MCF 10A (cell line): ENCODE measurements at regions of chr18 and their contacts with region 1.

Region 1: GRCh38 chr18:51197661-51198424 is at the start of gene MEX3C:
- DNase-seq: peak; percentile 100
- H3K4me3 Mint-ChIP-seq: peak within 1 kb of the TSS; percentile 69
- H3K27ac Mint-ChIP-seq: peak within 1 kb of the TSS; percentile 92
- H3K4me1 Mint-ChIP-seq: peaks cover 18% of the 10 kb centered on the region
- H3K27me3 Mint-ChIP-seq: no peaks in the 10 kb centered on the region
- CTCF ChIP-seq: no peak
- total RNA-seq, gene MEX3C: 65.3 and 81.9 TPM in 2 replicates

Region 2: GRCh38 chr18:49572611-49573345 is 1625.1 kb before region 1 on chr18:
- CTCF ChIA-PET with region 1: no interaction called
- POLR2A ChIA-PET with region 1: no interaction called
- intact Hi-C with region 1: no loop called
- DNase-seq: no peak
- H3K4me3 Mint-ChIP-seq: no peak overlapping the region
- H3K27ac Mint-ChIP-seq: no peak overlapping the region
- H3K4me1 Mint-ChIP-seq: peaks cover 17% of the 10 kb centered on the region
- H3K27me3 Mint-ChIP-seq: no peaks in the 10 kb centered on the region
- CTCF ChIP-seq: no peak

Region 3: GRCh38 chr18:50707855-50708469 is 489.9 kb before region 1 on chr18:
- CTCF ChIA-PET with region 1: no interaction called
- POLR2A ChIA-PET with region 1: no interaction called
- intact Hi-C with region 1: no loop called
- DNase-seq: peak; percentile 51
- H3K4me3 Mint-ChIP-seq: no peak overlapping the region
- H3K27ac Mint-ChIP-seq: no peak overlapping the region
- H3K4me1 Mint-ChIP-seq: no peaks in the 10 kb centered on the region
- H3K27me3 Mint-ChIP-seq: peaks cover 17% of the 10 kb centered on the region
- CTCF ChIP-seq: no peak

Region 4: DNA sequence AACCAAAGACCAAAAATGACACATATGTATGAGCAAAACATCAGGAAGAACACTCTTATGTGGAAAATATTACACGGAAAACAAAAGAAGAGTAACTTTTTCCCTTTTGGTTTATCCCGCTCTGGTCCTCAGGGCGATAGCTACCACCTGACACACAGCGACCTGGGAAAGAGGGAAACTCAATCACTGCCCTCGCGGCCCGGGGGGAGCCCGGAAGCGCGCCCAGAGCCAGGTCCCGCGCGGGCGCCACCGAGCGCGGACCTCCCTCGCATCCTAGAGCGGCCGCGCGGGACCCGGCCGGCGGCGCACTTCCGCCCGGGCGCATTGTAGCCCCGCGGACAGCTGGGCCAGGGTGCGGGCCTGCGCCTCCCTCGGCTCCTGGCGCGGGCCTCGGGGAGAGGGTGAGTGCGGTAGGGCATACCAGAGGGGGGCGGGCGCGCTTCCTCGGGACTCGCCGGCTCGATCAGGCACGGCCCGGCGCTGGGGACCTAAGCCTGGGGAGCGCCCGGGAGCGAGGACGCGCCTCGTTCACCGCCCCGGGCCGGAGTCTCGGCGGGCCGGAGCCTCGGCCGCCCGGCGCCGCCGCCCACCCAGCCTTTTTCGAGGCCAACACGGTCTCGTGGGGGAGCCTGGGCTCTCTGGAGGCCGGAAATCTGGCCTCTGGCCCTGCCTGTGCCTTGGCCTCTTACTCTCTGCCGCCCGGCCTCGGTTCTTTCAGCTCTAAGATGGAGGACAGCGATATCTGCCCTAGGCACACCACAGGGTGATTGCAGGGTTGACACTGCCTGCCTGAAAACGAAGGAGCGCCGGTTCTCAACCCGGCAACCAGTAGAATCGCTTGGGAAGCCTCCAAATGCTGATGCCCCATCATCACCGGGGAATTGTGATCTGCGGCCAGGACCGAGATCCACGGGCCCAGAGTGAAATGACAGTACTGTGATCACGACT is 229.9 kb before region 1 on chr18 and contains the start of gene ELAC1:
- CTCF ChIA-PET with region 1: no interaction called
- POLR2A ChIA-PET with region 1: no interaction called
- intact Hi-C with region 1: no loop called
- DNase-seq: peak; percentile 72
- H3K4me3 Mint-ChIP-seq: peak within 1 kb of the TSS; percentile 68
- H3K27ac Mint-ChIP-seq: peak within 1 kb of the TSS; percentile 75
- H3K4me1 Mint-ChIP-seq: peaks cover 27% of the 10 kb centered on the region
- H3K27me3 Mint-ChIP-seq: no peaks in the 10 kb centered on the region
- CTCF ChIP-seq: no peak
- total RNA-seq, gene ELAC1: 10.8 and 14.0 TPM in 2 replicates

Region 5: GRCh38 chr18:51029694-51030536 is 167.9 kb before region 1 on chr18 and contains the start of gene SMAD4:
- CTCF ChIA-PET with region 1: no interaction called
- POLR2A ChIA-PET with region 1: interaction called, 12 read pairs
- intact Hi-C with region 1: no loop called
- DNase-seq: peak; percentile 96
- H3K4me3 Mint-ChIP-seq: peak within 1 kb of the TSS; percentile 96
- H3K27ac Mint-ChIP-seq: peak within 1 kb of the TSS; percentile 100
- H3K4me1 Mint-ChIP-seq: peaks cover 22% of the 10 kb centered on the region
- H3K27me3 Mint-ChIP-seq: no peaks in the 10 kb centered on the region
- CTCF ChIP-seq: no peak
- total RNA-seq, gene SMAD4: 75.8 and 84.4 TPM in 2 replicates

Region 6: GRCh38 chr18:51151568-51152511 is 46.0 kb before region 1 on chr18:
- CTCF ChIA-PET with region 1: no interaction called
- POLR2A ChIA-PET with region 1: interaction called, 36 read pairs
- intact Hi-C with region 1: no loop called
- DNase-seq: no peak
- H3K4me3 Mint-ChIP-seq: no peak overlapping the region
- H3K27ac Mint-ChIP-seq: no peak overlapping the region
- H3K4me1 Mint-ChIP-seq: peaks cover 10% of the 10 kb centered on the region
- H3K27me3 Mint-ChIP-seq: no peaks in the 10 kb centered on the region
- CTCF ChIP-seq: no peak

Region 7: GRCh38 chr18:51266773-51267172 is 68.9 kb after region 1 on chr18:
- CTCF ChIA-PET with region 1: no interaction called
- POLR2A ChIA-PET with region 1: interaction called, 7 read pairs
- intact Hi-C with region 1: loop called (anchors 2 kb)
- DNase-seq: peak; percentile 80
- H3K4me3 Mint-ChIP-seq: no peak overlapping the region
- H3K27ac Mint-ChIP-seq: no peak overlapping the region
- H3K4me1 Mint-ChIP-seq: peaks cover 11% of the 10 kb centered on the region
- H3K27me3 Mint-ChIP-seq: no peaks in the 10 kb centered on the region
- CTCF ChIP-seq: no peak

Region 8: GRCh38 chr18:51537487-51537886 is 339.6 kb after region 1 on chr18:
- CTCF ChIA-PET with region 1: interaction called, 3 read pairs
- POLR2A ChIA-PET with region 1: interaction called, 3 read pairs
- intact Hi-C with region 1: loop called (anchors 1 kb)
- DNase-seq: peak; percentile 74
- H3K4me3 Mint-ChIP-seq: no peak overlapping the region
- H3K27ac Mint-ChIP-seq: no peak overlapping the region
- H3K4me1 Mint-ChIP-seq: no peaks in the 10 kb centered on the region
- H3K27me3 Mint-ChIP-seq: no peaks in the 10 kb centered on the region
- CTCF ChIP-seq: peak; percentile 54